Transverse colon (tissue), 4 donors: ENCODE measurements at regions of chr22 and their contacts with region 1.

Region 1: GRCh38 chr22:19629720-19630419 is 84.4 kb upstream of the SEPTIN5 start:
- DNase-seq: peak; percentile 79
- H3K4me3 ChIP-seq: no peak overlapping the region
- H3K27ac ChIP-seq: no peak overlapping the region
- H3K4me1 ChIP-seq: no peaks in the 10 kb centered on the region
- H3K27me3 ChIP-seq: peaks cover 30% of the 10 kb centered on the region
- CTCF ChIP-seq: peak; percentile 84 to 91 (median 85)
- EP300 ChIP-seq: no peak
- POLR2A ChIP-seq: no peak

Region 2: DNA sequence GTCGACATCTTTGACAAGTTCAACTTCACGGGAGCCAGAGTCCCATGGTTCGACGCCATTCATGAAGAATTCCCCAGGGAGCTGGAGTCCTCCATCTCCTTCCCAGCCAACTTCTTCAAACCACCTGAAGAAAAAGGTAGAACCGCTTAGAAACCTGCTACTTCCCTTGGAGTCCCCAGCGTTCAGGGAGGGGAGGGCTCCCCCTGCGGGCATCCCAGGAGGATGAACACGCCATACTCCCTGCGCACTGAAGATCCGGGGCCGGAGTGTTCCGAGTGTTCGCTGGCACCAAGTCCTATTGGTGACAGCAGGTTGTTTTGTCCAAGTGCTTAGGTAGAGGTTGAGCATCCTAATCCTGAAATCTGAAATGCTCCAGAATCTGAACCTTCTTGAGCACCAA is 642.1 kb before region 1 on chr22:
- in situ Hi-C with region 1: loop called in 1 of 4 experiments (anchors 25 kb)
- intact Hi-C with region 1: no loop called
- DNase-seq: no peak
- H3K4me3 ChIP-seq: no peak overlapping the region
- H3K27ac ChIP-seq: no peak overlapping the region
- H3K4me1 ChIP-seq: no peaks in the 10 kb centered on the region
- H3K27me3 ChIP-seq: no peaks in the 10 kb centered on the region
- CTCF ChIP-seq: peak in 3 of 5 experiments; percentile 17 to 25 (median 21)
- EP300 ChIP-seq: no peak
- POLR2A ChIP-seq: no peak

Region 3: DNA sequence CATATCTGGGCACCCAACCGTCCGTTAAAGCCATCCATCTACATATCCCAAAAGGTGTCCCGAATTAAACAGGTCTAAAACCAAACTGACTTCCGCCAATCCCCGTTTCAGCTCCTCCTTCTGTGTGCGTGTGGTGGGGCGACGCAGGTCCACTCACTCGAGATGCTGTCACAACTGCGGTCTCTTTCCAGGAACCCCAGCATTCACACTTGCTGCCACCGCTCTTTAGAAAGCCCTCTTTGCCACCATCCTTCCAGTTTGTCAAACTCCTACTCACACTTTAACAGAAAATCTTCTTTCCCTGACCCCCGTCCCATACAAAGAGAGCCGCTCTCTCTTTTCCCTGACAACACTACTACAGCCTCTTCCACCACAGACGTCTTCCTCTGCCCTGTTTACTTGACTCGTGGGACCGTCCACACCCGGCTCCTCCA is 485.9 kb before region 1 on chr22:
- in situ Hi-C with region 1: loop called in 1 of 4 experiments (anchors 25 kb)
- intact Hi-C with region 1: no loop called
- DNase-seq: no peak
- H3K4me3 ChIP-seq: peak overlapping the region; percentile 71 to 89 (median 80)
- H3K27ac ChIP-seq: peak overlapping the region; percentile 76 to 89 (median 84)
- H3K4me1 ChIP-seq: peaks cover 8 to 17% (median 13%) of the 10 kb centered on the region in 4 donors
- H3K27me3 ChIP-seq: peaks cover 14% of the 10 kb centered on the region
- CTCF ChIP-seq: no peak
- EP300 ChIP-seq: no peak
- POLR2A ChIP-seq: no peak

Region 4: DNA sequence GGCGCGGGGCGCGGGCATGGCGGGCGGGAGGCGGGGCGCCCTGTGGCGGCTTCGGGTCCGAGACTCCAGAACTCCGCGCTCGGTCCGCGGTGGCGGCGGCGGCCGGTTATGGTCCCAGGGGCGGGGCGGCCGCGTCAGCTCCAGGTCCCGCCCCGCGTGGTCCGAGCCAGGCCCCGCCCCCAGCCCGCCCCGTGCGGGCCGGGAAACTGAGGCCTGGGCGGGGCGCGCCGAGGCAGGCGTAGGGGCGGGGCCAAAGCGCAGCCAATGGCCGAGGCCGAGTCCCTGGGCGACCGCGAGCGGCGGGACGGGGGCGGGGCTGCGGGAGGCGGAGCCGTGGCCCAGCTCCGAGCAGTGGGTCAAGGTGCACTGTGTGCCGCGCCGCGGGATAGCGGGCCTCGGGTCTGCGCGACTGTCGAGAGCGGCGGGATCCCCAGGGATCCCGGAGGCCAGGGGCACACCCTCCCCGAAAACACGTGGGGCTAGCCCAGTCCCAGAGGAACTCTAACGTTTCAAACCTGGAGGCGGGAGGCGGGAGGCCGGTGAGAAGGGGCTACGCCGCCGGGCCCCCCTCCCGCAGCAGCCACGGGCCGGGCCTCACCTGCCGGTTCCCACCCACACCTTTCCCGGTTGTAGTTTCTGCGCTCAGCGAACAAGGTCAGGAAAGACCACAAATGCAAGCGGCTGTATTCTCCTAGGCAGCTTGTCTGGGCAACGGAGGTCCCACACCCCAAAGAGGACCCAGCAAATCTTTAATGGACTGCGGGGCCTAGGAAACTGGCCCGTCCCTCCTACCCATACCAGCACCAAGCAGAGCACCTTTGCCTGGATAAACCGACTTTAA is 451.0 kb before region 1 on chr22 and contains the start of gene SLC25A1:
- in situ Hi-C with region 1: loop called in 1 of 4 experiments (anchors 25 kb)
- intact Hi-C with region 1: no loop called
- DNase-seq: peak; percentile 96
- H3K4me3 ChIP-seq: peak within 1 kb of the TSS; percentile 87 to 92 (median 88)
- H3K27ac ChIP-seq: peak within 1 kb of the TSS; percentile 94 to 97 (median 96)
- H3K4me1 ChIP-seq: peaks cover 10 to 31% (median 27%) of the 10 kb centered on the region in 4 donors
- H3K27me3 ChIP-seq: no peaks in the 10 kb centered on the region
- CTCF ChIP-seq: no peak
- EP300 ChIP-seq: no peak
- POLR2A ChIP-seq: peak; percentile 63
- total RNA-seq, gene SLC25A1: 80.2 to 146 (median 132) TPM

Region 5: GRCh38 chr22:19214078-19214473 is 415.8 kb before region 1 on chr22:
- in situ Hi-C with region 1: loop called in 1 of 4 experiments (anchors 25 kb)
- intact Hi-C with region 1: no loop called
- DNase-seq: no peak
- H3K4me3 ChIP-seq: no peak overlapping the region
- H3K27ac ChIP-seq: no peak overlapping the region
- H3K4me1 ChIP-seq: peaks cover 0 to 5% (median 0%) of the 10 kb centered on the region in 4 donors
- H3K27me3 ChIP-seq: no peaks in the 10 kb centered on the region
- CTCF ChIP-seq: no peak
- EP300 ChIP-seq: no peak
- POLR2A ChIP-seq: no peak

Region 6: DNA sequence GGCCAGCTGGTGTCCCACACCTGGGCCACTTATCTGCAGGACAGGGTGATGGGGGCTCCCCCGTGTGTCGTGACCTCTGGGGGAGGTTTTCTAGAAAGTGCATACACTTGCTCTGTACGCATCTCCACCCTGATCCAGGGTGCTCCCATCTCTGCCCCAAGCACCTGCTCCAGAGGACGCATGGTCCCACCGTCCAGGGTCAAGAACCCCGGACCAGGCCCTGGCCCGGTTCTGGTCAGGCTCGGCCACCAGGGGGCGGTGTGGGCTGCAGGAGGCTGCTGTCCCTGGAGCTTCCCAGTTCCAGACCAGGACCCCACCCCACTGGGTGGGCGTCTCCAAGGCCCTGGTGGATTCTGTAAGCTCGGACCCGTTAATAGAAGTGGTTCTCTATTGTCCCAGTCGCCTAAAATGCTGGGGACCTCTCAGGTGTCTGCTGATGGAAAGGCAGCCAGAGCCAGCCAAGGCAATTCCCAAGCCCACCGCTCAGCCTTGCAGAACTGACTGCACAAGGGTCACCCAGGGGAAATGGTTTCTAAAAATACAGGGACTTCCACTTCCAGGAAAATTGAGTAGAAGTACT is 49.7 kb after region 1 on chr22:
- in situ Hi-C with region 1: no loop called
- intact Hi-C with region 1: no loop called
- DNase-seq: peak; percentile 27
- H3K4me3 ChIP-seq: no peak overlapping the region
- H3K27ac ChIP-seq: no peak overlapping the region
- H3K4me1 ChIP-seq: no peaks in the 10 kb centered on the region
- H3K27me3 ChIP-seq: peaks cover 42% of the 10 kb centered on the region
- CTCF ChIP-seq: peak; percentile 63 to 83 (median 80)
- EP300 ChIP-seq: no peak
- POLR2A ChIP-seq: no peak

Region 7: GRCh38 chr22:19810351-19811201 is 180.7 kb after region 1 on chr22:
- in situ Hi-C with region 1: no loop called
- intact Hi-C with region 1: no loop called
- DNase-seq: no peak
- H3K4me3 ChIP-seq: no peak overlapping the region
- H3K27ac ChIP-seq: no peak overlapping the region
- H3K4me1 ChIP-seq: peaks cover 0 to 11% (median 6%) of the 10 kb centered on the region in 4 donors
- H3K27me3 ChIP-seq: no peaks in the 10 kb centered on the region
- CTCF ChIP-seq: no peak
- EP300 ChIP-seq: no peak
- POLR2A ChIP-seq: no peak